ENCODE measurements at regions of chr19 and their contacts with region 1.

Region 1: GRCh38 chr19:44723952-44724319 is 24.6 kb upstream of the BCL3 start:
- DNase-seq: peak; percentile 87
- H3K4me3 ChIP-seq: no peak overlapping the region; a peak in 1 of 4 replicates
- H3K27ac ChIP-seq: no peak overlapping the region
- H3K4me1 ChIP-seq: peaks cover 0 to 11% of the 10 kb centered on the region in 2 experiments; a peak in 3 of 4 replicates
- H3K27me3 ChIP-seq: no peaks in the 10 kb centered on the region
- CTCF ChIP-seq: peak; percentile 96
- EP300 ChIP-seq: no peak
- RAD21 ChIP-seq: peak; percentile 97

Region 2: GRCh38 chr19:44570984-44571684 is 152.8 kb before region 1 on chr19:
- CTCF ChIA-PET with region 1: interaction called, 29 read pairs
- POLR2A ChIA-PET with region 1: no interaction called
- DNase-seq: peak; percentile 61
- H3K4me3 ChIP-seq: peak overlapping the region in 1 of 2 experiments; percentile 34; a peak in 1 of 4 replicates
- H3K27ac ChIP-seq: no peak overlapping the region
- H3K4me1 ChIP-seq: no peaks in the 10 kb centered on the region
- H3K27me3 ChIP-seq: peaks cover 32% of the 10 kb centered on the region; the same call in 1 of the 2 replicates
- CTCF ChIP-seq: peak; percentile 88
- EP300 ChIP-seq: no peak
- RAD21 ChIP-seq: peak; percentile 81

Region 3: GRCh38 chr19:44677019-44677821 is 46.7 kb before region 1 on chr19:
- CTCF ChIA-PET with region 1: no interaction called
- POLR2A ChIA-PET with region 1: no interaction called
- DNase-seq: peak; percentile 53
- H3K4me3 ChIP-seq: no peak overlapping the region
- H3K27ac ChIP-seq: peak overlapping the region in 1 of 2 experiments; percentile 87; a peak in 2 of 4 replicates
- H3K4me1 ChIP-seq: no peaks in the 10 kb centered on the region
- H3K27me3 ChIP-seq: no peaks in the 10 kb centered on the region
- CTCF ChIP-seq: 0 out of 2 replicates have a peak, but pooled peaks have one; percentile 12
- EP300 ChIP-seq: peak in 1 of 2 experiments; percentile 55; a peak in 1 of 4 replicates
- RAD21 ChIP-seq: no peak

Region 4: GRCh38 chr19:44712864-44713515 is 10.9 kb before region 1 on chr19:
- CTCF ChIA-PET with region 1: interaction called, 57 read pairs
- POLR2A ChIA-PET with region 1: no interaction called
- DNase-seq: no peak
- H3K4me3 ChIP-seq: no peak overlapping the region
- H3K27ac ChIP-seq: no peak overlapping the region
- H3K4me1 ChIP-seq: no peaks in the 10 kb centered on the region
- H3K27me3 ChIP-seq: no peaks in the 10 kb centered on the region
- CTCF ChIP-seq: no peak
- EP300 ChIP-seq: no peak
- RAD21 ChIP-seq: no peak

Region 5: DNA sequence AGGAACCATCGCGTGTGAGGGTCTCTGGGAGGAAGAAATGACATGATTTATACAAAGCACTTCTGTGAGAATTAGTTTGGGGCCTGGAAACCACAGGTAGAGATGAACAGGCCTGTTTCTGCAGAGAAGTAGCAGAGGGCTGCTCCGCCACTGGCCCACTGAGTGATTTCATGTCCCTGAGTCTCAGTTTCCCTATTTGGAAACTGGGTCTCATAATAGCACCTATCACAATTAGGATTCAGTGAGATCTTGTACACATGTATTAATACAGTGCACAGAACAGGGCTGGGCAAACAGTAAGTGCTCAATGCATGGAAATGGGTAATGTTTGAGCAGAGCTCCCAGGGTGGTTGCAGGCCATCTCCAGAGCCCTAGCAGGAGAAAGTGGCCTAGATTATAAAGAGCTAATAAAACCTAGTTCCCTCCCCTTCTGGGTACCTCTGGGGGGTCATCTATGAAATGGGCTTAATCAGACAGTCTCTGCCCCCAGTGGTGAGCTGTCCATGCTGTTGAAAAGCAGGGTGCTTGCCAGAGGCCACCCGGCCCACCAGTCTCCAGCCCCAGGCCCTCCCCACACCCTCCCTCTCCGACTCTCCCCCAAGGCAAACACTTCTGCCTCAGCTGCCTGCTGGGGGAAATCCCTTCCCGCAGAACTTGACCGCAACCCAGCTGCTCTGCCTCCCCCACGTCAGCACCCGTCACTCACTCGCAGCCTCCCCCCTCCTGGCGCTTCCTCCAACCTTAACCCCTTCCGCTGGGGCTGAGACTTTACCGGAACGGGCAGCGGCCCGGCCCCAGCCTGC is 29.1 kb after region 1 on chr19:
- CTCF ChIA-PET with region 1: interaction called, 86 read pairs
- POLR2A ChIA-PET with region 1: interaction called, 3 read pairs
- DNase-seq: peak; percentile 68
- H3K4me3 ChIP-seq: peak overlapping the region in 1 of 2 experiments; percentile 36; a peak in 1 of 4 replicates
- H3K27ac ChIP-seq: peak overlapping the region; percentile 64 to 70; a peak in 3 of 4 replicates
- H3K4me1 ChIP-seq: peaks cover 17 to 27% of the 10 kb centered on the region in 2 experiments; a peak in 3 of 4 replicates
- H3K27me3 ChIP-seq: no peaks in the 10 kb centered on the region
- CTCF ChIP-seq: no peak
- EP300 ChIP-seq: peak; percentile 55 to 90; a peak in 2 of 4 replicates
- RAD21 ChIP-seq: no peak

Region 6: GRCh38 chr19:44792281-44792680 is 68.3 kb after region 1 on chr19:
- CTCF ChIA-PET with region 1: interaction called, 22 read pairs
- POLR2A ChIA-PET with region 1: no interaction called
- DNase-seq: no peak
- H3K4me3 ChIP-seq: no peak overlapping the region
- H3K27ac ChIP-seq: no peak overlapping the region
- H3K4me1 ChIP-seq: no peaks in the 10 kb centered on the region; a peak in 1 of 4 replicates
- H3K27me3 ChIP-seq: no peaks in the 10 kb centered on the region
- CTCF ChIP-seq: no peak
- EP300 ChIP-seq: no peak
- RAD21 ChIP-seq: no peak

Region 7: GRCh38 chr19:44820648-44821609 is 97.0 kb after region 1 on chr19:
- CTCF ChIA-PET with region 1: interaction called, 18 read pairs
- POLR2A ChIA-PET with region 1: no interaction called
- DNase-seq: no peak
- H3K4me3 ChIP-seq: no peak overlapping the region
- H3K27ac ChIP-seq: no peak overlapping the region
- H3K4me1 ChIP-seq: no peaks in the 10 kb centered on the region
- H3K27me3 ChIP-seq: peaks cover 44% of the 10 kb centered on the region; the same call in 1 of the 2 replicates
- CTCF ChIP-seq: no peak
- EP300 ChIP-seq: no peak
- RAD21 ChIP-seq: no peak

Region 8: DNA sequence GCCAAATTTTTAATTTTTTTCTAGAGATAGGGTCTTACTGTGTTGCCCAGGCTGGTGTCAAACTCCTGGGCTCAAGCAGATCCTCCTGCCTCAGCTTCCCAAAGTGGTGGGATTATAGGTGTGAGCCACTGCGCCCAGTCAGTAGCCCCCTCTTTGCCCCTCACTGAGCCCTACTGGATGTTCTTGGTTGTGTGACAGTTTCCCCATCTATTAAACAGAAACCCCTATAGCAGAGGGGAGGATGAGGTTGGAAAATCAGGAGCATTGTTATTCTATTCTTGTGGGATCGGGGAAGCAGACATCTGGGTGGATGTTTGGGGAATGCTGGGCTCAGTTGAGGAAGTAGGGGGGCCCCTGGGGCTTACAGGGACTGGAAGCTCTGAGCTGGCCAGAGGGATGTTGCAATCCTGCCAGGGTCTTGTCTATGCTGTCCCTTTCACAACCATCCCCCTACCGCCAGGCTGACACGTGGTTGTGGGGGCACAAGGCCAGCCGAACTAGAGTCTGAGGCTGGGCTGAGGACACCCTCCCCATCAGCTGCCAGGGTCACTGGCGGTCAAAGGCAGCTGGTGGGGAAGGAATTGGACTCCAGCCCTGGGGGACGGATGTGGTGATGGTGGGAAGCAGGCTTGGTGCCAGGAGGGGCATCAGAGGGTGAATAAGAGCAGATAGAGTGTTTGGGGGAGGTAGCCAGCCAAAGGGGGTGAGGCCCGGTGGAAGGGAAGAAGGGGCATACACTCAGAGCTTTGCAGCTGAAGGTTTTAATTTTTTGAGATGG is 201.4 kb after region 1 on chr19:
- CTCF ChIA-PET with region 1: no interaction called
- POLR2A ChIA-PET with region 1: no interaction called
- DNase-seq: no peak
- H3K4me3 ChIP-seq: no peak overlapping the region
- H3K27ac ChIP-seq: no peak overlapping the region
- H3K4me1 ChIP-seq: no peaks in the 10 kb centered on the region; a peak in 1 of 4 replicates
- H3K27me3 ChIP-seq: no peaks in the 10 kb centered on the region
- CTCF ChIP-seq: no peak
- EP300 ChIP-seq: no peak
- RAD21 ChIP-seq: no peak